Activated T-helper 1 cell treated with anti-CD3 and anti-CD28 coated beads, Interleukin-12 subunit alpha, Interleukin-12 subunit beta, Interleukin-2, Interleukin-4 antibody, amounts not matched to agents 30 ng/mL and 10 ng/mL and 1 ng/mL, durations not matched to agents 14 hours and 24 hours and 36 hours (primary cell): ENCODE measurements at regions of chr2 and their contacts with region 1.

Region 1: GRCh38 chr2:38377050-38377828 is at the start of gene ATL2:
- DNase-seq: peak; percentile 92
- H3K4me3 Mint-ChIP-seq: peak within 1 kb of the TSS; percentile 95
- H3K27ac Mint-ChIP-seq: peak within 1 kb of the TSS; percentile 96
- H3K4me1 Mint-ChIP-seq: peaks cover 55% of the 10 kb centered on the region
- H3K27me3 Mint-ChIP-seq: peaks cover 14% of the 10 kb centered on the region
- total RNA-seq, gene ATL2: 62.1 and 72.5 TPM in 2 replicates

Region 2: GRCh38 chr2:38315707-38316333 is 61.4 kb before region 1 on chr2:
- intact Hi-C with region 1: loop called (anchors 1 kb)
- DNase-seq: peak; percentile 16
- H3K4me3 Mint-ChIP-seq: no peak overlapping the region
- H3K27ac Mint-ChIP-seq: no peak overlapping the region
- H3K4me1 Mint-ChIP-seq: peaks cover 19% of the 10 kb centered on the region
- H3K27me3 Mint-ChIP-seq: no peaks in the 10 kb centered on the region

Region 3: GRCh38 chr2:38465789-38466127 is 88.5 kb after region 1 on chr2:
- intact Hi-C with region 1: loop called (anchors 1 kb)
- DNase-seq: no peak
- H3K4me3 Mint-ChIP-seq: no peak overlapping the region
- H3K27ac Mint-ChIP-seq: no peak overlapping the region
- H3K4me1 Mint-ChIP-seq: peaks cover 10% of the 10 kb centered on the region
- H3K27me3 Mint-ChIP-seq: peaks cover 10% of the 10 kb centered on the region

Region 4: GRCh38 chr2:38535744-38536506 is 158.7 kb after region 1 on chr2:
- intact Hi-C with region 1: no loop called
- DNase-seq: peak; percentile 72
- H3K4me3 Mint-ChIP-seq: peak overlapping the region; percentile 67
- H3K27ac Mint-ChIP-seq: no peak overlapping the region
- H3K4me1 Mint-ChIP-seq: no peaks in the 10 kb centered on the region
- H3K27me3 Mint-ChIP-seq: peaks cover 14% of the 10 kb centered on the region

Region 5: GRCh38 chr2:38665854-38666555 is 288.8 kb after region 1 on chr2 and contains the start of gene GALM:
- intact Hi-C with region 1: loop called (anchors 1 kb)
- DNase-seq: peak; percentile 54
- H3K4me3 Mint-ChIP-seq: peak within 1 kb of the TSS; percentile 93
- H3K27ac Mint-ChIP-seq: peak within 1 kb of the TSS; percentile 94
- H3K4me1 Mint-ChIP-seq: peaks cover 69% of the 10 kb centered on the region
- H3K27me3 Mint-ChIP-seq: no peaks in the 10 kb centered on the region
- total RNA-seq, gene GALM: 77.0 and 78.4 TPM in 2 replicates

Region 6: GRCh38 chr2:38875576-38876367 is 498.5 kb after region 1 on chr2 and contains the starts of genes DHX57 and MORN2:
- intact Hi-C with region 1: loop called (anchors 10 kb)
- DNase-seq: peak; percentile 78
- H3K4me3 Mint-ChIP-seq: peak within 1 kb of the TSS; percentile 99
- H3K27ac Mint-ChIP-seq: peak within 1 kb of the TSS; percentile 96
- H3K4me1 Mint-ChIP-seq: peaks cover 24% of the 10 kb centered on the region
- H3K27me3 Mint-ChIP-seq: no peaks in the 10 kb centered on the region
- total RNA-seq, gene DHX57: 18.6 and 20.3 TPM in 2 replicates
- total RNA-seq, gene MORN2: 4.9 and 5.3 TPM in 2 replicates